CD4-positive, alpha-beta memory T cell (primary cell): ENCODE measurements at regions of chr16 and their contacts with region 1.

Region 1: GRCh38 chr16:71883849-71884638 is at the start of gene ZNF821:
- DNase-seq: peak; percentile 72 to 90 (median 79)
- H3K4me3 ChIP-seq: peak within 1 kb of the TSS; percentile 67 to 72
- H3K4me3 Mint-ChIP-seq: peak within 1 kb of the TSS; percentile 93 to 99 (median 95)
- H3K27ac ChIP-seq: peak within 1 kb of the TSS; percentile 78
- H3K27ac Mint-ChIP-seq: peak within 1 kb of the TSS; percentile 96 to 100 (median 97)
- H3K4me1 ChIP-seq: peaks cover 48% of the 10 kb centered on the region
- H3K4me1 Mint-ChIP-seq: peaks cover 41 to 57% (median 47%) of the 10 kb centered on the region in 4 donors
- H3K27me3 ChIP-seq: no peaks in the 10 kb centered on the region
- H3K27me3 Mint-ChIP-seq: peaks cover 0 to 3% of the 10 kb centered on the region in 2 donors
- total RNA-seq, gene ZNF821: 8.0 to 9.7 TPM

Region 2: GRCh38 chr16:71564155-71564967 is 319.7 kb before region 1 on chr16:
- CTCF ChIA-PET with region 1: interaction called, 3 read pairs
- POLR2A ChIA-PET with region 1: interaction called, 8 read pairs
- intact Hi-C with region 1: loop called (anchors 5 kb)
- DNase-seq: no peak
- H3K4me3 ChIP-seq: peak overlapping the region; percentile 7 to 61
- H3K4me3 Mint-ChIP-seq: peak overlapping the region; percentile 89 to 96 (median 93)
- H3K27ac ChIP-seq: peak overlapping the region; percentile 69
- H3K27ac Mint-ChIP-seq: peak overlapping the region; percentile 90 to 99 (median 96)
- H3K4me1 ChIP-seq: peaks cover 12% of the 10 kb centered on the region
- H3K4me1 Mint-ChIP-seq: peaks cover 11 to 21% (median 17%) of the 10 kb centered on the region in 4 donors
- H3K27me3 ChIP-seq: no peaks in the 10 kb centered on the region
- H3K27me3 Mint-ChIP-seq: no peaks in the 10 kb centered on the region

Region 3: DNA sequence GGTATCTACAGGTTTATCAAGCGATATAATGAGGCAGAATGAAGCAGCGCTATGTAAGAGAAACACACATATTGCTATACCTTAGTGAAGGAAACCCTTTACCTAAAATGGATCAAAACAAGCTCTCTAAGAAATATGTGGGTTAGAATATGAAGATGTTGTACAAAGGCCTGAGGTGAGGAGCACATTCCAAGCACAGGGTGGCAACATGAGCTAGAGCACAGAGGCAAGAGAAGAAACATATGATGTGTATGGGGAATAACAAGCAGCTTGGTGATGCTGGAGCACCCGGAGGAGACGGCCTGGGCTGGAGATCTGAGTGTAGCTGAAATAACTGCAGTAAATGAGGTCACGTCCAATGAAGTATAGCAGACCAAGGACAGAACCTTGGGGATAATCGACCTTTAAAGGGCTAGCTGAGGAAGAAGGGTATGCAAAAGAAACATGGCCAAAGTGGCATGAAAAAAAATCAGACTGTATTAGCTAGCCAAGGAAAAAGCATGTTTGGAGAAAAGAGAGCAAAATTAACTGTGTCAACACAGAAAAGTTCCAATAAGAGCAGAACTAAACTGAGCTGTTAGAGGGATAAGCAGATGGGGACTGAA is 214.0 kb before region 1 on chr16:
- CTCF ChIA-PET with region 1: no interaction called
- POLR2A ChIA-PET with region 1: no interaction called
- intact Hi-C with region 1: no loop called
- DNase-seq: no peak
- H3K4me3 ChIP-seq: no peak overlapping the region
- H3K4me3 Mint-ChIP-seq: no peak overlapping the region
- H3K27ac ChIP-seq: no peak overlapping the region
- H3K27ac Mint-ChIP-seq: peak overlapping the region in 1 of 7 donors; percentile 23
- H3K4me1 ChIP-seq: no peaks in the 10 kb centered on the region
- H3K4me1 Mint-ChIP-seq: no peaks in the 10 kb centered on the region
- H3K27me3 ChIP-seq: no peaks in the 10 kb centered on the region
- H3K27me3 Mint-ChIP-seq: no peaks in the 10 kb centered on the region

Region 4: GRCh38 chr16:71792176-71792575 is 91.9 kb before region 1 on chr16:
- CTCF ChIA-PET with region 1: interaction called, 9 read pairs
- POLR2A ChIA-PET with region 1: interaction called, 4 read pairs
- intact Hi-C with region 1: loop called (anchors 1 kb)
- DNase-seq: no peak
- H3K4me3 ChIP-seq: no peak overlapping the region
- H3K4me3 Mint-ChIP-seq: peak overlapping the region in 4 of 8 donors; percentile 21 to 56 (median 41)
- H3K27ac ChIP-seq: no peak overlapping the region
- H3K27ac Mint-ChIP-seq: peak overlapping the region in 5 of 7 donors; percentile 13 to 53 (median 37)
- H3K4me1 ChIP-seq: peaks cover 73% of the 10 kb centered on the region
- H3K4me1 Mint-ChIP-seq: peaks cover 44 to 86% (median 67%) of the 10 kb centered on the region in 4 donors
- H3K27me3 ChIP-seq: no peaks in the 10 kb centered on the region
- H3K27me3 Mint-ChIP-seq: no peaks in the 10 kb centered on the region

Region 5: GRCh38 chr16:71845639-71846430 is 38.2 kb before region 1 on chr16 and contains the start of gene ATXN1L:
- CTCF ChIA-PET with region 1: interaction called, 27 read pairs
- POLR2A ChIA-PET with region 1: interaction called, 22 read pairs
- intact Hi-C with region 1: loop called (anchors 1 kb)
- DNase-seq: peak; percentile 90 to 98 (median 94)
- H3K4me3 ChIP-seq: peak within 1 kb of the TSS; percentile 84 to 89
- H3K4me3 Mint-ChIP-seq: peak within 1 kb of the TSS; percentile 90 to 95 (median 94)
- H3K27ac ChIP-seq: peak within 1 kb of the TSS; percentile 88
- H3K27ac Mint-ChIP-seq: peak within 1 kb of the TSS; percentile 97 to 99 (median 98)
- H3K4me1 ChIP-seq: peaks cover 18% of the 10 kb centered on the region
- H3K4me1 Mint-ChIP-seq: peaks cover 26 to 54% (median 38%) of the 10 kb centered on the region in 4 donors
- H3K27me3 ChIP-seq: no peaks in the 10 kb centered on the region
- H3K27me3 Mint-ChIP-seq: no peaks in the 10 kb centered on the region
- total RNA-seq, gene ATXN1L: 29.6 to 31.6 TPM

Region 6: DNA sequence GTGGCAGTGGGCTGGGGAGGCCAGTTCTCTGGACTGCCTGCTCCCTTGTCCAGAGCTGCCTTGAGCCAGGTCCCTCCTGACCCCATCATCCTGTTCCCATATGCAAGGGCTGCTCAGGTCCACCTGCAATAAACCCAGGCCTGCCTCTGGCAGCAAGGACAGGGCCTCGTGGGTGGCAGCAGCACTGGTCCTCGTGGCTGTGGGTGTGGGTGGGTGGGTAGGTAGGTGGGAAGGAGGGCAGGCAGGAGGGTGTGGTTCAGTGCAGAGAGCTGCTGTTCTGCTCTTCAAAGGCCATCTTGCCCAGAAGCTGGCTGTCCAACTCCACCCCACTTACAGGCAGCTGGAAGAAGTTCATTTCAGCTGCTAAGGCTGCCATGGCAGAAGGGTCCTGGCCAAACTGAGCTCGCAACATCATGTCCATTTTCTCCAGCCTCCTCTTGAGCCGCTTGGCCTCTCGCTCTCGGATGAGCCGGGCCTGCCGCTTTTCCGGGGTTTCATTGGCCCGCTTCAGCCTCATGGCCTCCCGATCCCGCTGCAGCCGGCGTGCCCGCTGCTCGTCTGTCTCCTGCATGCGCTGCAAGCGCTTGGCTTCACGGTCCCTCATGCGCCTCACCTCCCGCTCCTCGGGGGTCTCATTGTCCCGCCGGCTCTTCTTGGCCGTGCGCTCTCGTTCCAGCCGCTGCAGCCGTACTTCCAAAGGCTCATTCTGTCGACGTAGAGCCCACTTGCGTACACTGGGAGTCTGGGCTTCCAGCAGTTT is 24.1 kb before region 1 on chr16:
- CTCF ChIA-PET with region 1: interaction called, 16 read pairs
- POLR2A ChIA-PET with region 1: interaction called, 10 read pairs
- intact Hi-C with region 1: no loop called
- DNase-seq: no peak
- H3K4me3 ChIP-seq: no peak overlapping the region
- H3K4me3 Mint-ChIP-seq: no peak overlapping the region
- H3K27ac ChIP-seq: no peak overlapping the region
- H3K27ac Mint-ChIP-seq: peak overlapping the region in 1 of 7 donors; percentile 11
- H3K4me1 ChIP-seq: peaks cover 22% of the 10 kb centered on the region
- H3K4me1 Mint-ChIP-seq: peaks cover 16 to 30% (median 25%) of the 10 kb centered on the region in 4 donors
- H3K27me3 ChIP-seq: no peaks in the 10 kb centered on the region
- H3K27me3 Mint-ChIP-seq: no peaks in the 10 kb centered on the region

Region 7: GRCh38 chr16:71894921-71895678 is 11.1 kb after region 1 on chr16 and contains the start of gene IST1:
- CTCF ChIA-PET with region 1: interaction called, 116 read pairs
- POLR2A ChIA-PET with region 1: interaction called, 225 read pairs
- intact Hi-C with region 1: loop called (anchors 1 kb)
- DNase-seq: peak; percentile 97 to 98 (median 97)
- H3K4me3 ChIP-seq: peak within 1 kb of the TSS; percentile 95 to 99
- H3K4me3 Mint-ChIP-seq: peak within 1 kb of the TSS; percentile 93 to 98 (median 96)
- H3K27ac ChIP-seq: peak within 1 kb of the TSS; percentile 90
- H3K27ac Mint-ChIP-seq: peak within 1 kb of the TSS; percentile 96 to 99 (median 98)
- H3K4me1 ChIP-seq: peaks cover 44% of the 10 kb centered on the region
- H3K4me1 Mint-ChIP-seq: peaks cover 10 to 51% (median 25%) of the 10 kb centered on the region in 4 donors
- H3K27me3 ChIP-seq: no peaks in the 10 kb centered on the region
- H3K27me3 Mint-ChIP-seq: no peaks in the 10 kb centered on the region
- total RNA-seq, gene IST1: 282 to 287 TPM

Region 8: DNA sequence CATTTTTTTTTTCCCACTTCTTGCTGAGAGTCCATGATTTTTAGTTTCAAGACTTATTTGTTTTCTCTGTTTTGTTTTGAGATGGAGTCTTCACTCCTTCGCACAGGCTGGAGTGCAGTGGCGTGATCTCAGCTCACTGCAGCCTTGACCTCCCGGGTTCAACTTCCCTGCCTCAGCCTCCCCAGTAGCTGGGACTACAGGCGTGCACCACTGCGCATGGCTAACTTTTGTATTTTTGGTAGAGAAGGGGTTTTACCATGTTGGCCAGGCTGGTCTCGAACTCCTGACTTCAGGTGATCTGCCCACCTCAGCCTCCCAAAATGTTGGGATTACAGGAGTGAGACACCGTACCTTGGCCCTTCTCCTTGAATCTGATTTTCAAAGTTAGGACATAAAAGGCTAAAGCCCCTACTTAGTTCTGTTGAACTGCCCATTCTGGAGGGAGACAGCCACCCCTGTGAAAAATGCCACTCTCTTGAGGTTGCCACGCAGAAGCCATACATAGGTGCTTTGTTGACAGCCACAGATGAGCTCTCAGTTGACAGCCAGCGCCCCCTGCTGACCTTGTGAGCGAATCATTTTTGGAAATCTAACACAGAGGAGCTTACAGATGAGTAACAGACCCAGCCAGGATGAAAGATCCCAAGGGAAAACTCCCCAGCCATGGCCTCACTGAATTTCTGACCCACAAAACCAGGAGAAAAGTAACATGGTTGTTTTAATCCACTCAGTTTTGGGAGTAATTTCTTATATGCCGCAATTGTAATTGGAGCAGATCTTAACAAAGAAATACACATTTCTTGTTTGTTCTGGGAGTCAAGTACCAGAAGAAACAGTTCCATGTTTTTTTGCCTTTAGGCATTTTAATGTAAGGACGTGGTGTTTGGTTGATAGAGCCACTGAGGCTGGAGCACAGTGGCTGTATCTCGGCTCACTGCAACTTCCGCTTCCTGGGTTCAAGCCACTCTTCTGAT is 77.3 kb after region 1 on chr16:
- CTCF ChIA-PET with region 1: interaction called, 7 read pairs
- POLR2A ChIA-PET with region 1: interaction called, 4 read pairs
- intact Hi-C with region 1: loop called (anchors 2 kb)
- DNase-seq: peak; percentile 69 to 75 (median 70)
- H3K4me3 ChIP-seq: no peak overlapping the region
- H3K4me3 Mint-ChIP-seq: no peak overlapping the region
- H3K27ac ChIP-seq: no peak overlapping the region
- H3K27ac Mint-ChIP-seq: peak overlapping the region in 1 of 7 donors; percentile 43
- H3K4me1 ChIP-seq: peaks cover 5% of the 10 kb centered on the region
- H3K4me1 Mint-ChIP-seq: peaks cover 5 to 9% (median 6%) of the 10 kb centered on the region in 4 donors
- H3K27me3 ChIP-seq: no peaks in the 10 kb centered on the region
- H3K27me3 Mint-ChIP-seq: peaks cover 0 to 3% of the 10 kb centered on the region in 2 donors

Region 9: DNA sequence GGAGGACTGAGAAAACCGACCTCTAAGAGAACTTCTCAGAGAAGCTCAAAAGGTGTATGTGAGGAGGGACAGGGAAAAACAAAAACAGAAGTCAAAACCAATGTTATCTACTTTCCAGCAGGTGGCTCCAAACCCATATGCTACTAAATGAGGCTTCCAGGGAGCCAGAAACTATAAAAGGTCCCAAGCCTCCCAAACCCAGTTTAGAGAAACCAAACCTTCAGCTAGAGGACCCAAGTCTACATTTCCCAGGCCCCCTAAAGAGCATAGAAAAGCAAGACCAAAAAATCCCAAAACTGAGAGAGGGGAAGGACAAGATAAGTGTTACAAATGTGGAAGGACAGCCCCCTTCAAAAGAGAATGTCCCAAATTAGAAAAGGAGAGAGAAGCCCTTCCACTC is 182.7 kb after region 1 on chr16:
- CTCF ChIA-PET with region 1: no interaction called
- POLR2A ChIA-PET with region 1: no interaction called
- intact Hi-C with region 1: no loop called
- DNase-seq: peak in 4 of 5 donors; percentile 4 to 24 (median 9)
- H3K4me3 ChIP-seq: no peak overlapping the region
- H3K4me3 Mint-ChIP-seq: no peak overlapping the region
- H3K27ac ChIP-seq: no peak overlapping the region
- H3K27ac Mint-ChIP-seq: peak overlapping the region in 1 of 7 donors; percentile 29
- H3K4me1 ChIP-seq: no peaks in the 10 kb centered on the region
- H3K4me1 Mint-ChIP-seq: peaks cover 0 to 2% (median 0%) of the 10 kb centered on the region in 4 donors
- H3K27me3 ChIP-seq: no peaks in the 10 kb centered on the region
- H3K27me3 Mint-ChIP-seq: no peaks in the 10 kb centered on the region